ENCODE measurements at regions of chr6 and their contacts with region 1.

Region 1: DNA sequence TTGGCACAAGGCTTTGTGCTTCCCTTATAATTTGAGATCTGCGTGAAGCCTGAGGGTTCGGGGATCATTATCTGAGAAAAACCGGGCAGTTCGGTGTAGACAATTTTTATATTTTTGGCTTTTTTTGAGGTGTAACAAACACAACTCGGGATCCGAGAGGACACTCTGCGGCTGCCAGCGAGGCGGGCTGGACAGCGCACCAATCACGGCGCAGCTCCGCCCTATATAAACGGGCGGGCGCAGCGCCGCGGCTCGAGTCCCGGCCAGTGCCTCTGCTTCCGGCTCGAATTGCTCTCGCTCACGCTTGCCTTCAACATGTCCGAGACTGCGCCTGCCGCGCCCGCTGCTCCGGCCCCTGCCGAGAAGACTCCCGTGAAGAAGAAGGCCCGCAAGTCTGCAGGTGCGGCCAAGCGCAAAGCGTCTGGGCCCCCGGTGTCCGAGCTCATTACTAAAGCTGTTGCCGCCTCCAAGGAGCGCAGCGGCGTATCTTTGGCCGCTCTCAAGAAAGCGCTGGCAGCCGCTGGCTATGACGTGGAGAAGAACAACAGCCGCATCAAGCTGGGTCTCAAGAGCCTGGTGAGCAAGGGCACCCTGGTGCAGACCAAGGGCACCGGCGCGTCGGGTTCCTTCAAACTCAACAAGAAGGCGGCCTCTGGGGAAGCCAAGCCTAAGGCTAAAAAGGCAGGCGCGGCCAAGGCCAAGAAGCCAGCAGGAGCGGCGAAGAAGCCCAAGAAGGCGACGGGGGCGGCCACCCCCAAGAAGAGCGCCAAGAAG is 69.0 kb downstream of the HFE start:
- DNase-seq: peak; percentile 74
- H3K4me3 ChIP-seq: peak overlapping the region; percentile 83
- H3K27ac ChIP-seq: peak overlapping the region; percentile 97
- H3K27me3 ChIP-seq: no peaks in the 10 kb centered on the region
- CTCF ChIP-seq: peak; percentile 1; the same call in 1 of the 2 replicates

Region 2: DNA sequence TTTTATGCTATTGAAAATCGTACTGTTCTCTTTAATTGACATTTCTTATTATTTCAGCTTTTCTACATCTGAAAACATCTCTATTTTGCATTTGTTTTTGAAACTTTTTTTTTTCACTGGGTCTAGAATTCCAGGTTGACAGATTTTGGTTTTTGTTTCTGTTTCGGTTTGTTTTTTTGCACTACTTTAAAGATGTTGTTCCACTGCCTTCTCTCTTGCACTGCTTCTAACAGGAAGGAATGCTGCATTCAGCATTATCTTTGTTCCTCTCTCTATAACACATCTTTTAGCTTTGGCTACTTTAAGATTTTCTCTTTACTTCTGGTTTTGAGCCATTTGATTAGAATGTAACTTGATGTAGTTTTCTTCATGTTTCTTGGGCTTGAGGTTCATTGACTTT is 304.3 kb before region 1 on chr6:
- CTCF ChIA-PET with region 1: no interaction called
- POLR2A ChIA-PET with region 1: no interaction called
- DNase-seq: no peak
- H3K4me3 ChIP-seq: no peak overlapping the region
- H3K27ac ChIP-seq: no peak overlapping the region
- H3K27me3 ChIP-seq: no peaks in the 10 kb centered on the region
- CTCF ChIP-seq: no peak

Region 3: DNA sequence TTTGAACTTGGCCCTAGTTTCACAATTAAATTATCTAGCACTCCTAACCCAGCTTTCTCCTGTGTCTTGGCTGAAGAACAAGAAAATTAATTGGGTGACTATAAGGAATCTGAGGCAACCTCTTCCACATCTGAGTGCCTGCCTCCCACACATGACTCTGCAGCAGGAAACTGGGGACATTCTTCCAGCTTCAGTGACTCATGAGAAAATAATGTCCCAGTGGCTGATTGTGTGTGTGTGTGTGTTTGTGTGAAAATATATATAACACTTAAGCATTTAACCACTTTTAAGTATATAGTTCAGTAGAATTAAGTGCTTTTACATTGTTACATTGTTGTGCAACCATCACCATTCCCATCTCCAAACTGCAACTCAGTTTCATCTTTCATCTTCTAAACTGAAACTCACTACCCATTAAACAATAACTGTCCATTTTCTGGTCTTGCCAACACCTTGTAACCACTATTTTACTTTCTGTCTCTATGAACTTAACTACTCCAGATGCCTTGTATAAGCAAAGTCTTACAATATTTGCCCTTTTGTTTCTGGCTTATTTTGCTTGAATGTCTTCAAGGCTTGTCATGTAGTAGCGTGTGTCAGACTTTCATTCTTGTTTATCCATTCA is 185.0 kb before region 1 on chr6:
- CTCF ChIA-PET with region 1: no interaction called
- POLR2A ChIA-PET with region 1: no interaction called
- DNase-seq: peak; percentile 59
- H3K4me3 ChIP-seq: no peak overlapping the region
- H3K27ac ChIP-seq: no peak overlapping the region
- H3K27me3 ChIP-seq: no peaks in the 10 kb centered on the region
- CTCF ChIP-seq: no peak

Region 4: DNA sequence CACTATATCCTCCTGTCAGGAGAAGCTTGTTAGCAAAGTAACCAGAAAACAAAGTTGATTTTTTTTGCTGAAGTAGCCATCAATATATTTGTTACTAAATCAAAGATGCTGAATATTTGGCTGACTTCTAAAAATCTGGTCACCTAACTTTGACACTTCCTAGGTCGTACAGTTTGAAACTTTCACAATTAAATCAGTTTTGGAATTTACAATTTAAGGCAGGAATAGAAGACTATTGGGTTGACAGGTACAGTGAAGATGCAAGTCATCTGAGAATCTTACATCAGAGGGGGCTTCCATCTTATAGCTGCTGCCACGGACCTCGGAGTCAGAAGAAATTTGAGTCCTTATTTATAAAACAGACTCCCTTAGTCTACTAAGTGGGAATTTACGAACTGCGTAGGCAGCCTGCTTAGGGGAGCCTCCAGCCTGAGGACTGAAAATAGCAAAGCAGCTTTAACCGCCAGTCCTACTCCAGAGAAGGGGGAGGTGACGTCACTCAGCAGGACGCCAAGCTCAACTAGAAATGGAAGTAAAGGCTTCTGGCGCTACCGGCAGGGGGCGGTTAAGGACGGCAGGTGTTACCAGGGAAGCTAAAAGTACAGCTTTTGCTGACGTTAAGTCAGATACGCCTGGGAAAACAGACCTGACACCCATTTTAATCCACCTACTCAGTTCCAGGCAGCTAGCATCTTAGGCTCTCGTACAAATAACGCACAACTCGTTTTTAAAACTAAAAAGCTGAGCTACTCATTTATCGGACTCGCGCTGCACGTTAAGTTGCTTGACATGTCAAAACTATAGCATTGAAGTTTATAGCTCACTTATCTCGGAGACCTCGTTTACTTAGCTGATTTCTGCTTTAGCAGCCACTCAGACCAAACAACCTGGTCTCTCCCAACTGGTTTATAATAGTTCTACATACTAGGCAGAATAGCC is 130.1 kb before region 1 on chr6:
- CTCF ChIA-PET with region 1: interaction called, 4 read pairs
- POLR2A ChIA-PET with region 1: interaction called, 26 read pairs
- DNase-seq: peak; percentile 94
- H3K4me3 ChIP-seq: peak overlapping the region; percentile 78
- H3K27ac ChIP-seq: peak overlapping the region; percentile 91
- H3K27me3 ChIP-seq: no peaks in the 10 kb centered on the region
- CTCF ChIP-seq: peak; percentile 93

Region 5: GRCh38 chr6:26045065-26045927 is 111.0 kb before region 1 on chr6:
- CTCF ChIA-PET with region 1: no interaction called
- POLR2A ChIA-PET with region 1: interaction called, 45 read pairs
- DNase-seq: peak; percentile 82
- H3K4me3 ChIP-seq: peak overlapping the region; percentile 66
- H3K27ac ChIP-seq: peak overlapping the region; percentile 63
- H3K27me3 ChIP-seq: no peaks in the 10 kb centered on the region
- CTCF ChIP-seq: peak; percentile 19; the same call in 1 of the 2 replicates

Region 6: DNA sequence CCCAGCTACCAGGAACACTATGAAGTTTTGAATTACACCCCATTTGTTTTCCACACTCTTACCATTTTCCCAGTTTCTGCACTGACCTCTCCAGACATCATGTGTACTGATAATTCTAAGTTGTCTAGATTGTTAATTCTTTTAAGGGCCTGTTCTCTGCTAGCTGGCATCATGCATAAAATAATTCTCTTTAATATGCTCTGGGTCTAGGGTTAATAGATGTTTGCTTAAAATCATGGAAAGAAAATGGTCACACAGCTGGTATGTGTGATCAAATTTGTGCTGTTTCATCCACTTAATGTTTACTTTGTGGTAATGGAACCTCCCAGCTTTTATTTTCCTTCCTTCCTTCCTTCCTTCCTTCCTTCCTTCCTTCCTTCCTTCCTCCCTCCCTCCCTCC is 19.9 kb before region 1 on chr6:
- CTCF ChIA-PET with region 1: interaction called, 3 read pairs
- POLR2A ChIA-PET with region 1: interaction called, 15 read pairs
- DNase-seq: no peak
- H3K4me3 ChIP-seq: no peak overlapping the region
- H3K27ac ChIP-seq: no peak overlapping the region
- H3K27me3 ChIP-seq: no peaks in the 10 kb centered on the region
- CTCF ChIP-seq: no peak

Region 7: DNA sequence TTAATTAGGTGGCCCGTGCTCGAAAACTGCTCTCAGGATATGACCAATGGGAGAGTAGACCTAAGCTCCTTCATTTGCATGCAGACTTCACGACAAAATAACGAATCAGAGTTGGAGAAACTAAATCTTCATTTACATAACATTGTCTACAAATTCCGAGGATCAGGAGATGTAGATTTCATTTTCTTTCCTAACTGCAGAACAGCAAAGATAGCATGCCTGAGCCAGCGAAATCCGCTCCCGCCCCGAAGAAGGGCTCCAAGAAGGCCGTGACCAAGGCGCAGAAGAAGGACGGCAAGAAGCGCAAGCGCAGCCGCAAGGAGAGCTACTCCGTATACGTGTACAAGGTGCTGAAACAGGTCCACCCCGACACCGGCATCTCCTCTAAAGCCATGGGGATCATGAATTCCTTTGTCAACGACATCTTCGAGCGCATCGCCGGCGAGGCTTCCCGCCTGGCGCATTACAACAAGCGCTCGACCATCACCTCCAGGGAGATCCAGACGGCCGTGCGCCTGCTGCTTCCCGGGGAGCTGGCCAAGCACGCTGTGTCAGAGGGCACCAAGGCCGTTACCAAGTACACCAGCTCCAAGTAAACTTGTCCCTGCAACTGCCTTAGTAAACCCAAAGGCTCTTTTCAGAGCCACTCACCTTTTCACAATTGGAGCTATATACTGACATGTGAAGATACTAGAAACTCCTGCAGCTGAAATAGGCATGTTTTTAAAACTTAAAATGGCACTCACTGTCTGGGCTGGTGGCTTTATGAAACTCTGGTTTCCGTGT is 27.5 kb after region 1 on chr6:
- CTCF ChIA-PET with region 1: no interaction called
- POLR2A ChIA-PET with region 1: interaction called, 69 read pairs
- DNase-seq: peak; percentile 72
- H3K4me3 ChIP-seq: peak overlapping the region; percentile 61
- H3K27ac ChIP-seq: peak overlapping the region; percentile 71
- H3K27me3 ChIP-seq: no peaks in the 10 kb centered on the region
- CTCF ChIP-seq: no peak

Region 8: DNA sequence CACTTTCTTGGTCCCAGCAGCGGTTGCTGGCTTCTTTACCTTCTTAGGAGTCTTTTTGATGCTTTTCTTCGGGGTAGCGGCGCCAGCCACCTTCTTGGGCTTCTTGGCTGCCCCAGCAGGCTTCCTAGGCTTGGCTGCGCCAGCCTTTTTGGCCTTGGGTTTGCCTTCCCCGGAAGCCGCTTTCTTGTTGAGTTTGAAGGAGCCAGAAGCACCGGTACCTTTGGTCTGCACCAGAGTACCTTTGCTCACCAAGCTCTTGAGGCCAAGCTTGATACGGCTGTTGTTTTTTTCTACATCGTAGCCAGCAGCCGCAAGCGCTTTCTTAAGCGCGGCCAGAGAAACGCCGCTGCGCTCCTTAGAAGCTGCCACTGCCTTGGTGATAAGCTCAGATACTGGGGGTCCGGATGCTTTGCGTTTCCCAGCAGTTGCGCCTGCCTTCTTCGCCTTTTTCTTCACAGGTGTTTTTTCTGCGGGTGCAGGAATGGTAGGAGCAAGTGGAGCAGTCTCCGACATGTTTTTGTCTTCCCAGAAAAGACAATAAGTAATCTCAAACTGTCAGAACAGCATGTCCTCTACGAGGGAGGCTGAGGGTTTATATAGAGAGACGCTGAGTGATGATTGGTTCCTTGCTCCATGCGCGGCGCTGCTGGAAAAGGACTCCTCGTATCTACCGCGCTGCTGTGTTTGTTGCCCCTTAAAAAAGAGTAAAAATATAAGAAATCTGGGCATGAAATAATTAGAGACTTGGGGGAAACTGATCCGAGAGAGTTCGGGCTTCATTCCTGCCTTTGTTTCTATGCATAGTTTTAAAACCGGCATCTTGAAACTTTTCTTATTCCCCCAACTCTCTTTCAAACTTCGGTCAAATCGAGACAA is 78.4 kb after region 1 on chr6:
- CTCF ChIA-PET with region 1: no interaction called
- POLR2A ChIA-PET with region 1: interaction called, 15 read pairs
- DNase-seq: no peak
- H3K4me3 ChIP-seq: peak overlapping the region; percentile 65
- H3K27ac ChIP-seq: peak overlapping the region; percentile 91
- H3K27me3 ChIP-seq: no peaks in the 10 kb centered on the region
- CTCF ChIP-seq: no peak

Measured in AG04450 (cell line).